BJ (cell line): ENCODE measurements at regions of chr17 and their contacts with region 1.

Region 1: DNA sequence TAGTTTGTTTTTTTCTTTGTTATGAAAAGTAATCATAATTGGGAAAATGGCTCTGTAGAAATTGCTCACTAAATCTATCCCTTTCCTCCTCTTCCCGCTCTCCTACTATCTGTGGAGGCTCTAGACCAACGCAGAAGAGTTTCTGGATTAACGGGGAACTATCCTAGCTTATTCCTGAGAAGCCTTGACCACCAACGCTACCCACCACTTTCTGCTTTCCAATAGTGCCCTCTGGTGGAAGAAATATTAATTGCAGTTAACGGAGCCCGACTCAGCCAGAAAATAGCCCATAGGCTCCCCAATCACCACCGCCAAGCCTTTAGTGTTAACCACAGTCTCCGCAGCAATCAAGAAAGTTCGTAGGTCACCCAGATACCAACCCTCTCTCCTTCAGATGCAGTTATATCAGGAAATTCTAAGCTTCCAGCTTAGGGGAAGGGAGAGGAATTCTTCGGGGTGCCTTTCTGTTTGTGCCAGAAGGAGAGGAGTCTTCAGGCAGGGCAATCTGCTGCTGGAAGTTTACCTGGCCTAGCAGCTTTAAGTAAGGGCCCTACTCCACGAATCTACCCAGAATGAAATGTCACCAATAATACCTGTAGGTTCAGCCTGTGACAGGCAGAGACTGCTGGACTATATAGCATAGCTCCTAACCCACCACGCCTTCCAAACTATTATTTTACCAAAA is 23.0 kb upstream of the NSRP1 start:
- DNase-seq: no peak
- H3K4me3 ChIP-seq: no peak overlapping the region
- H3K27me3 ChIP-seq: no peaks in the 10 kb centered on the region
- CTCF ChIP-seq: peak; percentile 68

Region 2: DNA sequence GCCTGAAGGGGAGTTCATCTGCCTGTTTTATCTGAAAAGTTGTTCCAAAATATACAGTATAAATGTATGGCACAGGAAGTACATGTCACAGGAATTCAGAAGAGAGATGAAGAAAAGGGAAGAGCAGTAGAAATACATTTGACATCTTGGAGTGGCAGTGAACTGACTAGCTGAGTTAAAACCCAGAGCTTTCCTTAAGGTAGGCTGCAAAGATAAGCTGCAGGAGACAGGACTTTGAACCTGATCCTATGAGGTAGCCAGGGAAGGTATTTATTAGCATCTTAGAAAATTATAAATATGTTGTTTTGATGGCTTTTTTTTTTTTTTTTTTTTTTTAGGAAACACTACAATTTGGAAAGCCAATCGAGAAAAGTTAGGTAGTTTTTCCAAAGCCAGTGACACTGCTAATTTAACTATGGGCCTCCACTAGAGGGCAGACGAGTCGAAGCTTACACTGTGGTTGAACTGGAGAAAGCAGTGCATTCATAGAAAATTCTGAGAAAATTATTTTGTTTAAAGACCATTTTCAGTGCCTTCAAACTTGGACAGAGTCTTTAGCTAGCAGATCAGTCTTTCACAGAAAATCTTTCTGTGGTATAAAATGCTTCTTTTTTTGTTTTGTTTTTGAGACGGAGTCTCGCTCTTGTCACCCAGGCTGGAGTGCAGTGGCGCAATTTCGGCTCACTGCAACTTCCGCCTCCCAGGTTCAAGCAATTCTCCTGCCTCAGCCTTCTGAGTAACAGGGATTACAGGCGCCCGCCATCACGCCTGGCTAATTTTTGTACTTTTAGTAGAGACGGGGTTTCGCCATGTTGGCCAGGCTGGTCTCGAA is 285.9 kb before region 1 on chr17:
- CTCF ChIA-PET with region 1: interaction called, 13 read pairs
- POLR2A ChIA-PET with region 1: no interaction called
- DNase-seq: no peak
- H3K4me3 ChIP-seq: no peak overlapping the region
- H3K27me3 ChIP-seq: no peaks in the 10 kb centered on the region
- CTCF ChIP-seq: peak; percentile 73

Region 3: GRCh38 chr17:30021708-30022317 is 71.8 kb before region 1 on chr17:
- CTCF ChIA-PET with region 1: interaction called, 110 read pairs
- POLR2A ChIA-PET with region 1: no interaction called
- DNase-seq: no peak
- H3K4me3 ChIP-seq: no peak overlapping the region
- H3K27me3 ChIP-seq: no peaks in the 10 kb centered on the region
- CTCF ChIP-seq: peak; percentile 81

Region 4: DNA sequence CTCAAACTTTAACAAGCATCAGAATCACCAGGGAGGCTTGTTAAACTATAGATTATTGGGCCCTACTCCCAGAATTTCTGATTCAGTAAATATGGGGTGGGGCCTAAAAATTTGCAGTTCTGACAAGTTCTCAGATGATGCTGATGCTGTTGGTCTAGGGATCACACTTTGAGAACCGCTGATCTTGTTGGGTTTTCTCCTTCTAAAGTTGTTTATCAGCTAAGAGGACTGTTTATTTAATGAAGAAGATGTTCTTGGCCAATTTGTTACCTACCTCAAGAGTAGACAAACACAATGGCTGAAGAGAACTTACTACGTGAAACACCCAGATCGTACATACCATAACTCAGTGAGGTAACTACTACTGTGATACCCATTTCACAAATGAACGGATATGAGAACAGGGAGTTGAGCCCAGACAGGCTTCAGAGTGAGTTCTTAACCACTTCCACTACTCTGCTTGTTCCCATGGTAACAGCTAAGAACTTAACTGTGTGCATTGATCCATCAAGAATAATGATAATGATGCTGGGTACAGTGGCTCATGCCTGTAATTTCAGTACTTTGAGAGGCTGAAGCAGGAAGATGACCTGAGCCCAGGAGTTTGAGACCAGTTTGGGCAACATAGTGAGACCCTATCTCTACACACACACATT is 62.3 kb before region 1 on chr17:
- CTCF ChIA-PET with region 1: interaction called, 110 read pairs
- POLR2A ChIA-PET with region 1: interaction called, 3 read pairs
- DNase-seq: no peak
- H3K4me3 ChIP-seq: no peak overlapping the region
- H3K27me3 ChIP-seq: no peaks in the 10 kb centered on the region
- CTCF ChIP-seq: no peak

Region 5: GRCh38 chr17:30074730-30075129 is 18.9 kb before region 1 on chr17:
- CTCF ChIA-PET with region 1: interaction called, 20 read pairs
- POLR2A ChIA-PET with region 1: no interaction called
- DNase-seq: no peak
- H3K4me3 ChIP-seq: no peak overlapping the region
- H3K27me3 ChIP-seq: peaks cover 7% of the 10 kb centered on the region
- CTCF ChIP-seq: no peak

Region 6: GRCh38 chr17:30104575-30105339 is 11.2 kb after region 1 on chr17:
- CTCF ChIA-PET with region 1: interaction called, 74 read pairs
- POLR2A ChIA-PET with region 1: no interaction called
- DNase-seq: no peak
- H3K4me3 ChIP-seq: peak overlapping the region; percentile 38
- H3K27me3 ChIP-seq: peaks cover 4% of the 10 kb centered on the region; the same call in 1 of the 2 replicates
- CTCF ChIP-seq: peak; percentile 94

Region 7: DNA sequence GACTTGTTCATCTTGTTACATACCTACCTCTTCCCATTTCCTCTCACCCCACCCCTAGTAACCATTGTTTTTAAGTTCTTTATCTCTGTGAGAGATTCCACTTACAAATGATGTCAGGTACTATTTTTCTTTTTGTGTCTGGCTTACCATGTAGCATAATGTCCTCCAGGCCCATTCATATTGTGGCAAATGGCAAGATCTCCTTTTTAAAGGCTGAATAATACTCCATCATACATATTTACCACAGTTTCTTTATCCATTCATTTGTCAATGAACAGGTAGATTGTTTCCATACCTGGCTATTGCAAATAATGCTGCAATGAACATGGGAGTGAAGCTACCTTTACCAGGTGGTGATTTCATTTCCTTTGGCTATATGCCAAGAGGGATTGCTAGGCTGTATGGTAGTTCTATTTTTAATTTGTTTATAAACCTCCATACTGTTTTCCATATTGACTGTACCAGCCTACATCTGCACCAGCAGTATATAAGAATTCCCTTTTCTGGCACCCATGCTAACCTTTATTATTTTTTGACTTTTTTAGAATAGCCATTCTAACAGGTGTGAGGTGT is 76.9 kb after region 1 on chr17:
- CTCF ChIA-PET with region 1: no interaction called
- POLR2A ChIA-PET with region 1: no interaction called
- DNase-seq: no peak
- H3K4me3 ChIP-seq: no peak overlapping the region
- H3K27me3 ChIP-seq: no peaks in the 10 kb centered on the region
- CTCF ChIP-seq: no peak

Region 8: DNA sequence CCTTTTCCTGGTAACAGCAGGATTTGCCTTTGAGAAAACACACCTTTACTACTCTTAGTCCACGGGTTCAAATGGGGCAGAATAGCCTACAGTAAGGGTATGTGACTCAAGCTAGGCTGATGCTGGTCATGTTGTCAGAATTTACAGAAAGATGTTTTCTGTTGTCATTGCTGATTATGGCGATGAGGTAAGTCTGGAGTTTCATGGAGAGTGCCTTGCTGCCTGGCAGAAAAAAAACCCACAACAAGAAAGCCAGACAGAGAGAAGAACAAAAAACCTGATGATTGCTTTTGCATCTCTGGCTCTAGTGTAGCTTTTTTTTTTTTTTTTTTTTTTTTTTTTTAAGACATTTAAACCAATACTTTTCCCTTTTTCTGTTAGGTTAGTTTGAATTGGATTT is 94.0 kb after region 1 on chr17:
- CTCF ChIA-PET with region 1: no interaction called
- POLR2A ChIA-PET with region 1: no interaction called
- DNase-seq: no peak
- H3K4me3 ChIP-seq: no peak overlapping the region
- H3K27me3 ChIP-seq: no peaks in the 10 kb centered on the region
- CTCF ChIP-seq: no peak

Region 9: GRCh38 chr17:30248786-30249185 is 155.2 kb after region 1 on chr17:
- CTCF ChIA-PET with region 1: no interaction called
- POLR2A ChIA-PET with region 1: no interaction called
- DNase-seq: no peak
- H3K4me3 ChIP-seq: no peak overlapping the region
- H3K27me3 ChIP-seq: no peaks in the 10 kb centered on the region
- CTCF ChIP-seq: no peak

Region 10: DNA sequence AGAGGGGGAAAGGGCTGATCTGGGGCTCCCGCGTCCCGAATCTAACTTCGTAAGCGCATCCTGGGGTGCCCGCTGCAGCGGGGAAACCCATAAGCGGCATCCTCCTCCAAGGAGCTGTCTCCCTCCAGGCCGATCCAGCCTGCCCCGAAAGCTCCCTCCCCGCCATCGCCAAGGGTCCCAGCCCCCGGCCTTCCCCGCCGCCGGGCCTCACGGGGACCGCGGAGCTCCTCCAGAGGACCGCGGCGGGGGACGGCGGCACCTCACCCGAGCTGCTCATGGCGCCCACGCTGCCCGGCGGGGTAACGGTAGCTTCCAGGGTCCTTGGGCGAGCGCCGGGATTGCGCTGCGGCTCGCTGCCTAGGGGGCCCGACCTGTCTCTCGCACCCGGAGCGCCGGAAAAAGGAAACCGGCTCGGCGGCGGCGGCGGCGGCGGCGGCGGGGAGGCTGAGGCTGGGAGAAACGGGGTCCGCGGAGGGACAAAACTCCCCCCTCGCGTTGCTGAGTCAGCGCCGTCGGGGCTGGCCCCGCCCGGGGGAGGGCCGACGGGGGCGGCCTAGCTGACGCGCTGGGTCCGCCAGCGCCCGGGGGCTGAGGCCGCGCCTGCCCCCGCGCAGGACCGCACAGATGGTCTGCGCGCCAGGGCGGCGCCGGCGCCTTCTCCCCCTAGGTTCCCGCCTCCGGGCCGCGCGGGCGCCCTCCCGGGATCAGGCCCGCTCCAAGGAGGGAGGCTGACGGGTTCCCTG is 198.1 kb after region 1 on chr17 and contains the start of gene BLMH:
- CTCF ChIA-PET with region 1: no interaction called
- POLR2A ChIA-PET with region 1: no interaction called
- DNase-seq: peak; percentile 25
- H3K4me3 ChIP-seq: peak within 1 kb of the TSS; percentile 62
- H3K27me3 ChIP-seq: no peaks in the 10 kb centered on the region
- CTCF ChIP-seq: no peak
- polyA plus RNA-seq, gene BLMH: 10.7 and 13.9 TPM in 2 replicates